Colonic mucosa (tissue), 4 donors: ENCODE measurements at regions of chr9 and their contacts with region 1.

Region 1: GRCh38 chr9:132507746-132508469 is 74.5 kb upstream of the BARHL1 start:
- DNase-seq: peak; percentile 72
- H3K4me3 ChIP-seq: no peak overlapping the region
- H3K27ac ChIP-seq: no peak overlapping the region
- H3K4me1 ChIP-seq: no peaks in the 10 kb centered on the region
- H3K27me3 ChIP-seq: no peaks in the 10 kb centered on the region
- CTCF ChIP-seq: peak; percentile 79

Region 2: GRCh38 chr9:132293145-132293721 is 214.7 kb before region 1 on chr9:
- intact Hi-C with region 1: no loop called
- DNase-seq: no peak
- H3K4me3 ChIP-seq: no peak overlapping the region
- H3K27ac ChIP-seq: no peak overlapping the region
- H3K4me1 ChIP-seq: no peaks in the 10 kb centered on the region
- H3K27me3 ChIP-seq: no peaks in the 10 kb centered on the region
- CTCF ChIP-seq: no peak

Region 3: DNA sequence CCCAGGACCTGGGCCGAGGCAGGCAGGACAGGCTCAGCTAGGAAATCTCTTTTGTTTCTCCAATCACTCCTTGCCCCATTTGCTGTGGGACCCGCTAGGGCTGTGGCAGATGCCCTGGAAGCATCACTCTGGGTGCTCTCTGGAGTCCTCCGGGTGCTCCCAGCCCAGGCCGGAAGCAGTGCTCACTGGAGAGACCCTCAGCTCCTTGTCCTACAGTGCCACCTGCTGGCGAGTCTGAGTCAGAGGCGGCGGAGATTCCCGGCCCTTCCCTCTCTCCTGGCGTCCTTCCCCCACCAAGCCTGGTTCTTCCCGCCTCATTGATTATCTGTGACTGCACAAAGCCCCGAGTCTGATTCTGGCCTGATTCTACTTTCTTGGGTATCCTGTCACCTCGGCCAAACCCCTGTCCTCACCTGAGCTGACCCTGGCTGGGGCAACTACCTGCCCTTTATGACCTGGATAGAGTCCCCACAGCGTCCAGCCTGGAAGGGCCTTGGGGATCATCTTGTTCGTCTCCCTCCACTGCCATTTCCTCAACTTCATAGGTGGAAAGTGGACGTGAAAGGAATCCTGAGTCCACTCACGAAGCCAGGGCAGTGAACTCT is 67.2 kb after region 1 on chr9:
- intact Hi-C with region 1: loop called (anchors 2 kb)
- DNase-seq: peak; percentile 70
- H3K4me3 ChIP-seq: no peak overlapping the region
- H3K27ac ChIP-seq: no peak overlapping the region
- H3K4me1 ChIP-seq: no peaks in the 10 kb centered on the region
- H3K27me3 ChIP-seq: peaks cover 42% of the 10 kb centered on the region
- CTCF ChIP-seq: peak; percentile 77

Region 4: GRCh38 chr9:132800038-132800648 is 292.2 kb after region 1 on chr9:
- intact Hi-C with region 1: loop called (anchors 2 kb)
- DNase-seq: peak; percentile 72
- H3K4me3 ChIP-seq: no peak overlapping the region
- H3K27ac ChIP-seq: no peak overlapping the region
- H3K4me1 ChIP-seq: peaks cover 3% of the 10 kb centered on the region
- H3K27me3 ChIP-seq: peaks cover 4% of the 10 kb centered on the region
- CTCF ChIP-seq: peak; percentile 89

Region 5: DNA sequence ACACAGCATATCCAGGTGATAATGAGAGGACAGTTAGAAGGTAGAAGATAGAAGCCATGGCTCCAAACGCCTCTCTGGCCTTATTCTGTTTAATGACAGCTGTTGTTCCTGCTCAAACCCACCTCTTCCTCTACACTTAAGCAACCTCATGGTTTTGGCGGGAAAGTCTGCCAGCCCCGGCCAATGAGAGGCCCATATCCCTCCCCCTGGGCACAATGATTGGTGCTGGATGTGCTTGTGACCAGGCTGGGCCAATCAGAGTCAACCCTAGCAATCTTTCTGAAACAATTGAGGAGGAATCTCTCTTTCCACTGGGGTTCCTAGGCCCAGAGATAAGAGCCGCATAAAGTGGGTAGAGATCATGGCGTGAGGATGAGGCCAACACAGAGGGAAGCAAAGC is 465.8 kb after region 1 on chr9:
- intact Hi-C with region 1: loop called (anchors 10 kb)
- DNase-seq: no peak
- H3K4me3 ChIP-seq: no peak overlapping the region
- H3K27ac ChIP-seq: no peak overlapping the region
- H3K4me1 ChIP-seq: peaks cover 5% of the 10 kb centered on the region
- H3K27me3 ChIP-seq: peaks cover 6% of the 10 kb centered on the region
- CTCF ChIP-seq: no peak